Activated naive CD4-positive, alpha-beta T cell treated with anti-CD3 and anti-CD28 coated beads for 36 hours (primary cell): ENCODE measurements at regions of chrX and their contacts with region 1.

Region 1: GRCh38 chrX:39309018-39309635 is 507.9 kb downstream of the MID1IP1 start:
- DNase-seq: peak; percentile 75
- H3K4me3 Mint-ChIP-seq: no peak overlapping the region
- H3K27ac Mint-ChIP-seq: peak overlapping the region; percentile 100
- H3K4me1 Mint-ChIP-seq: peaks cover 79% of the 10 kb centered on the region
- H3K27me3 Mint-ChIP-seq: no peaks in the 10 kb centered on the region

Region 2: GRCh38 chrX:39268207-39268606 is 40.9 kb before region 1 on chrX:
- CTCF ChIA-PET with region 1: interaction called, 3 read pairs
- intact Hi-C with region 1: loop called (anchors 1 kb)
- DNase-seq: no peak
- H3K4me3 Mint-ChIP-seq: peak overlapping the region; percentile 36
- H3K27ac Mint-ChIP-seq: peak overlapping the region; percentile 91
- H3K4me1 Mint-ChIP-seq: peaks cover 46% of the 10 kb centered on the region
- H3K27me3 Mint-ChIP-seq: no peaks in the 10 kb centered on the region

Region 3: DNA sequence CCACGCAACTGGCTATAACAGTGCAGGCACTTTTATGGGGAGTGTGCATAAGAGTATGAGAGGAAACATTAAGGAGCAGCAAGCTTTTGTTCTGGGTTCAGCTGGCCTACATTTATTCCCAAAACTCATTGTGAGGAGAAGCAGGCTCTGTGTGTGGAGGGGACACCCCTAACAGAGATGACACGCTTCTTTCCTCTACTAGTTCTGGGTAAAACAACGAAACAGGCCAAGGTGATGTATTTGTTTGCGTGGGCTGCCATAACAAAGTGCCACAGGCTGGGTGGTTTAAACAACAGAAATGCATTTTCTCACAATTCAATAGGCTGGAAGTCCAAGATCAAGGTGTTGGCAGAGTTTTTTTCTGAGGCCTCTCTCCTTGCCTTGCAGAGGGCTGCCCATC is 19.3 kb before region 1 on chrX:
- CTCF ChIA-PET with region 1: no interaction called
- intact Hi-C with region 1: loop called (anchors 2 kb)
- DNase-seq: peak; percentile 41
- H3K4me3 Mint-ChIP-seq: no peak overlapping the region
- H3K27ac Mint-ChIP-seq: no peak overlapping the region
- H3K4me1 Mint-ChIP-seq: peaks cover 34% of the 10 kb centered on the region
- H3K27me3 Mint-ChIP-seq: no peaks in the 10 kb centered on the region

Region 4: GRCh38 chrX:39331082-39331704 is 22.1 kb after region 1 on chrX:
- CTCF ChIA-PET with region 1: no interaction called
- intact Hi-C with region 1: loop called (anchors 1 kb)
- DNase-seq: peak; percentile 61
- H3K4me3 Mint-ChIP-seq: no peak overlapping the region
- H3K27ac Mint-ChIP-seq: peak overlapping the region; percentile 82
- H3K4me1 Mint-ChIP-seq: peaks cover 74% of the 10 kb centered on the region
- H3K27me3 Mint-ChIP-seq: no peaks in the 10 kb centered on the region

Region 5: GRCh38 chrX:39381422-39381821 is 72.3 kb after region 1 on chrX:
- CTCF ChIA-PET with region 1: no interaction called
- intact Hi-C with region 1: no loop called
- DNase-seq: no peak
- H3K4me3 Mint-ChIP-seq: no peak overlapping the region
- H3K27ac Mint-ChIP-seq: no peak overlapping the region
- H3K4me1 Mint-ChIP-seq: peaks cover 14% of the 10 kb centered on the region
- H3K27me3 Mint-ChIP-seq: no peaks in the 10 kb centered on the region